MCF 10A (cell line): ENCODE measurements at regions of chr20 and their contacts with region 1.

Region 1: DNA sequence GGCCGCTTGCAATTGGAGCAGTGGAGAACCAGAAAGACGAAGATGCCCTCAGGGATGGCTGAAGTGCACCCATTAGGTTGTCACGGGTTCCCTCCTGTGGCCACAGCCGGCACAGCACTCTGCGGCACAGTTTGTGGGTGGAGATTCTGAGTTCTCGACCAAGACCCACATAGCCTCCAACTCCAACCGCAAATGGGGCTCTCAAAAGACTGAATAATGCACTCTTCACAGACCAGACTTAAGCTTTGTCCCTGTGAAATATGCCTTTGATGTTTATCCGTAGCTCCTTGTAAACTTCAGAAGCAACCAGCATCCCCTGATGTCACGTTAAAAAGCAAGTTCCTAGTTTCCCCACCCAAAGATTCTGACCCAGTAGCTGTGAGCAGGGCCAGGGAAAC is 934 bp upstream of the CST9 start:
- DNase-seq: peak; percentile 86
- H3K4me3 Mint-ChIP-seq: no peak overlapping the region
- H3K27ac Mint-ChIP-seq: peak overlapping the region; percentile 58
- H3K4me1 Mint-ChIP-seq: no peaks in the 10 kb centered on the region
- H3K27me3 Mint-ChIP-seq: no peaks in the 10 kb centered on the region
- CTCF ChIP-seq: peak; percentile 90

Region 2: GRCh38 chr20:23435626-23436539 is 170.8 kb before region 1 on chr20:
- CTCF ChIA-PET with region 1: interaction called, 541 read pairs
- POLR2A ChIA-PET with region 1: interaction called, 3 read pairs
- intact Hi-C with region 1: loop called (anchors 1 kb)
- DNase-seq: no peak
- H3K4me3 Mint-ChIP-seq: no peak overlapping the region
- H3K27ac Mint-ChIP-seq: no peak overlapping the region
- H3K4me1 Mint-ChIP-seq: no peaks in the 10 kb centered on the region
- H3K27me3 Mint-ChIP-seq: no peaks in the 10 kb centered on the region
- CTCF ChIP-seq: no peak

Region 3: DNA sequence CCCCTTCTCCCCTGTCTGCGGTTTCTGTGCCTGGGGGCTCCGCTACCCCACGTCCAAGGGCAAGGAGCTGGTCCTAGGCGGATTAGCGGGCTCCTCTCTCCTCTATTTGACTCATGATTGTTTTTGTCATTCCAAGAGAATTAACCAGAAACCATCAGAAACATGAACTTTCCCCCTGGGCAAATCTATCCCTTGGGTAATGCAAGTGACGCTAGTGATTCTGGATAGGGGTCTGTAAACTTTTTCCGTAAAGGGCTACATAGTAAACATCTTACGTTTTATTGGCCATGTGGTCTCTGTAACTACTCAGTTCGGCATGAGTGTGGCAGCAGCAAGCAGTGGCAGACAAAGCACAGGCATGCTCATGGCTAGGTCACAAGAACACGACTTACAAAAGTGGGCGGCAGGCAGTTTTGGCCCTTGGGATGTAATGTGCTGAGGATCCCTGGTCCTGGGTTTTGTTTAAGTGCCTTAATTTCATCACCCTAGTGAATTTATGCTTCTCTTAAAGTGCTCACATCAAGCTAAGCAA is 154.6 kb before region 1 on chr20:
- CTCF ChIA-PET with region 1: interaction called, 541 read pairs
- POLR2A ChIA-PET with region 1: no interaction called
- intact Hi-C with region 1: no loop called
- DNase-seq: no peak
- H3K4me3 Mint-ChIP-seq: no peak overlapping the region
- H3K27ac Mint-ChIP-seq: no peak overlapping the region
- H3K4me1 Mint-ChIP-seq: no peaks in the 10 kb centered on the region
- H3K27me3 Mint-ChIP-seq: no peaks in the 10 kb centered on the region
- CTCF ChIP-seq: no peak

Region 4: DNA sequence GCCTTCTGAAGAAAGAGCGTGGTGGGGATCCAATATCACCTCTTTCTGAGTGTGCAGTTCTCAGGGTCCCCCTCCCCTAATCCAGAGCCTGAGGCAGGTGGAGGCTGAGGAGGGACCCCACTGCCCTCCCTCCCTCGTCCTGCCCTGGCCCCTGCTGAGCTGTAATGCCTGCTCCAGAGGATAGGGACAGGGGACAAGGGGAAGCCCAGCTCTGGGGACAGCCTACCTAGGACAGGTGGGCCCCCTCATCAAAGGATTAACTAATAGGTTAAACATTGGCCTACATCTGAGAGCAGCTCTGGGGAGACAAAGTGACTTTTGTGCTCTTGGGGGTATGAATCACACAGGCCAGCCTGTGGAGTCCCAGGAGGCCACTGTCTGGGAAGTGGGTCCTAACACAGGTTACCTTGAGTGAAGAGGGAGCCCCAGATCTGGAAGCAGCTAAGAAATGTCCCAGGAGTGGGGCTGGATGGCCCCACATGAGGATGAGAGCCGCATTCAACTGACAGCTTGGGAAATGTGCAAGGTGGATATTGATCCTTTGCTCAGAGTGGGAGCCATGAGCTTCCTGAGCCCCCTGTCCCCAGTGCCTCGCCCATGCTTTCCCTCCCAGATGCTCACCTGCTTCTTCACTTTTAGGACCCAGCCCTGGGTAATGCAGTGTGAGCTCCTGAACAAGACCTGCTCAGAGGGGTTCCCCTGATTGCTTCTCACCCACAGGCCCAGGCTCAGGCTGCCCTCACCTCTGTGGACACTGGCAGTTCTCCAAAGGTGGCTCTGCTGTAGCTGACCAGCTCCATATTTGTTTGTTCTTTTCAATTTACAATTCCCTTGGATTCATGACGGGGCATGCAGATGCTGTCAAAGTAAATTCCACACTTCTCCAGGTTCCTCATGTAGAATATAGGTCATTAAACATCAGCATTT is 20.6 kb before region 1 on chr20:
- CTCF ChIA-PET with region 1: interaction called, 23 read pairs
- POLR2A ChIA-PET with region 1: no interaction called
- intact Hi-C with region 1: no loop called
- DNase-seq: no peak
- H3K4me3 Mint-ChIP-seq: no peak overlapping the region
- H3K27ac Mint-ChIP-seq: no peak overlapping the region
- H3K4me1 Mint-ChIP-seq: peaks cover 21% of the 10 kb centered on the region
- H3K27me3 Mint-ChIP-seq: no peaks in the 10 kb centered on the region
- CTCF ChIP-seq: no peak

Region 5: GRCh38 chr20:23622839-23623343 is 16.2 kb after region 1 on chr20:
- CTCF ChIA-PET with region 1: interaction called, 36 read pairs
- POLR2A ChIA-PET with region 1: interaction called, 16 read pairs
- intact Hi-C with region 1: no loop called
- DNase-seq: peak; percentile 94
- H3K4me3 Mint-ChIP-seq: peak overlapping the region; percentile 61
- H3K27ac Mint-ChIP-seq: peak overlapping the region; percentile 92
- H3K4me1 Mint-ChIP-seq: peaks cover 43% of the 10 kb centered on the region
- H3K27me3 Mint-ChIP-seq: no peaks in the 10 kb centered on the region
- CTCF ChIP-seq: no peak

Region 6: GRCh38 chr20:23629017-23629541 is 22.4 kb after region 1 on chr20:
- CTCF ChIA-PET with region 1: interaction called, 8 read pairs
- POLR2A ChIA-PET with region 1: interaction called, 16 read pairs
- intact Hi-C with region 1: no loop called
- DNase-seq: peak; percentile 96
- H3K4me3 Mint-ChIP-seq: no peak overlapping the region
- H3K27ac Mint-ChIP-seq: peak overlapping the region; percentile 92
- H3K4me1 Mint-ChIP-seq: peaks cover 37% of the 10 kb centered on the region
- H3K27me3 Mint-ChIP-seq: no peaks in the 10 kb centered on the region
- CTCF ChIP-seq: no peak